PC-3 (cell line): ENCODE measurements at regions of chr15 and their contacts with region 1.

Region 1: DNA sequence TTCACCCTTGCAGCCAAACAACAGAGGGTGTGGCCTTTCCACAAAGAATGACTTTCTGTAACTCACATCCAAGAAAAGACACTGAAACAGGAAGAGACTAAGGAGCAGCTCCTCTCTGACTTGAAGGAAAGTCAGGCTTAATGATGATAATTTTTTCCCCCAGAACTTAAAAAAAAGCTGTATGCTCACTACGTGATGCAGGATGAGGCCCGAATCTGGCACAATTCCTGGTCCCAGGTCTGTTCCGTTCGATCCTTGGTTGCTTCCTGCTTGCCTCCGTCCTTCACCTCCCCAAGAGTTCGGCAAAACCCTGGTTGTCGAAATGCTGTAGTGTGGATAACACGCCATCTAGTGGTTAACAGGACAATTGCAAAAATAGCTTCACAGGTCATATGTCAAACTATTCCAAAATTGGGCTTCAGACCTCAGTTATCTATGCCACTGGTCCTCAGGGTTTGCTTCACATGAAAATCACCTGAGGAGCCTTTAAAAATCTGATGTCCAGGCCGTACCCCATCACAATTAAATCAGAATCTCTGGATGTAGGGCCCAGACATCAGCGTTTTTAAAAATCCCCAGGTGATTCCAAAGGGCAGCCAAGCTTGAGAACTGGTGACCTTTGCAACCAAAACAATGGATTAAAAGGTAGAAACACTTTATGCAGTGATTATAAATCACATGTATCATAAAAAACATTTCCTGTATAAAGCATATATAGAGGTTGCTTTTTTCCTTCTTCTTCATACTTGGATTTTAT is 28.1 kb upstream of the SYNM start:
- DNase-seq: peak; percentile 83
- ATAC-seq: peak; percentile 90
- H3K4me3 ChIP-seq: peak overlapping the region; percentile 62
- H3K27ac ChIP-seq: no peak overlapping the region
- H3K4me1 ChIP-seq: no peaks in the 10 kb centered on the region
- H3K27me3 ChIP-seq: no peaks in the 10 kb centered on the region
- CTCF ChIP-seq: peak; percentile 89

Region 2: DNA sequence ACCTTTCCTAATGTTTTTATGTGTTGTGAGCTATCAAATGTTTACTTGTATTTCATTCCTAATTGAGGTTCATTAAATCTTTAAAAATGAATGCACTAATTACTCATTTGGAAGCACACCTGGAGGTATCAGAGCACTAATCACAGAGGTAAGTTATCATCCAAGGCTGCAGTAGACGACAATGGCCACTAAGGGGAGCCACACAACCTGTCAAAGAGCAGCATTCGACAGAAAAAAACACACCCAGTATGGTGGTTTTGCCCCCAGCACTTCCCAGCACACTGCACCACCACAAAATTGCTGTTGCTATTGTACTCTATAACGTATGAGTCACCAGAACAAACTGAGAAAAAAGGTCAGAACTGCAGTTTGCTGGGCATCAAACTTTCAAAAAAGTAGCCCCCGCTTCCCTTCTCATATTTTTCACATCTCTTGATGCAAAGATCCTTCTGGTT is 634.3 kb before region 1 on chr15:
- CTCF ChIA-PET with region 1: no interaction called
- POLR2A ChIA-PET with region 1: no interaction called
- intact Hi-C with region 1: loop called (anchors 1 kb)
- DNase-seq: peak; percentile 88
- ATAC-seq: peak; percentile 92
- H3K4me3 ChIP-seq: no peak overlapping the region
- H3K27ac ChIP-seq: no peak overlapping the region
- H3K4me1 ChIP-seq: peaks cover 9% of the 10 kb centered on the region
- H3K27me3 ChIP-seq: peaks cover 24% of the 10 kb centered on the region
- CTCF ChIP-seq: peak; percentile 93

Region 3: DNA sequence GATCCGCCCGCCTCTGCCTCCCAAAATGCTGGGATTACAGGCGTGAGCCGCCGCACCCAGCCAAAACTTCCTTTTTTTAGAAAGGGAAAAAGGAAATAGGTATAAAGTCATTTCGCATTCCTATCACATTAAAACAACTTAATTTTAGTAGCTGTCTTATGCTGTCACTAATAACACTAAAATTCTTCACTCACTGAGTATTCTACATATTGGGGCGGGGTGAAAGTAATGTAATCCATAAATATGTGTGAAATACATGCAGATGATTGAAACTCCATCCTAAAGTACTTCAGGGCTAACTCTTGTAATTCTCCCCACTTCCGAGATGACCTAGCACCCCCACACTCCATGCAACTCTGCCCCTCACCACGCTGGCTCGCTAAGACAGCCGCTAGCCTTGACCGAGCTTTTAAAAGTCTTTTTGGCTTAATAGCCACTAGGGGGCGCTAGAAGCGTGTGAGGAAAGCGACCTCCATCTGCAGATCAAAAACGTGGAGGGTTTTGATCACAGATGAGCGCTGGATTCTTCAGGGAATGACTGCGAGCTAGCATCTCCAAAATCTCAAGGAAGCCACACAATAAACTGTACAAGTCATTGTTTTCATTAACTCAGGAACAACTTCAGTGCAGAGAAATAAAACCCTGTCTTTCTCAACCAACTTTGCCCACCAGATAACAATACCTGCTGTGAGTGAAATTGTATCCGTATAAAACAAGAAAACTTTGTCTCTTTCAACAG is 557.7 kb before region 1 on chr15:
- CTCF ChIA-PET with region 1: interaction called, 4 read pairs
- POLR2A ChIA-PET with region 1: no interaction called
- intact Hi-C with region 1: loop called (anchors 1 kb)
- DNase-seq: peak; percentile 77
- ATAC-seq: peak; percentile 88
- H3K4me3 ChIP-seq: no peak overlapping the region
- H3K27ac ChIP-seq: no peak overlapping the region
- H3K4me1 ChIP-seq: no peaks in the 10 kb centered on the region
- H3K27me3 ChIP-seq: peaks cover 8% of the 10 kb centered on the region; the same call in 1 of the 2 replicates
- CTCF ChIP-seq: peak; percentile 90

Region 4: GRCh38 chr15:98658831-98659699 is 417.7 kb before region 1 on chr15:
- CTCF ChIA-PET with region 1: no interaction called
- POLR2A ChIA-PET with region 1: no interaction called
- intact Hi-C with region 1: loop called (anchors 2 kb)
- DNase-seq: peak; percentile 74
- ATAC-seq: peak; percentile 77
- H3K4me3 ChIP-seq: no peak overlapping the region
- H3K27ac ChIP-seq: no peak overlapping the region
- H3K4me1 ChIP-seq: peaks cover 8% of the 10 kb centered on the region; the same call in 1 of the 2 replicates
- H3K27me3 ChIP-seq: peaks cover 7% of the 10 kb centered on the region; the same call in 1 of the 2 replicates
- CTCF ChIP-seq: peak; percentile 89

Region 5: GRCh38 chr15:98827217-98827616 is 249.5 kb before region 1 on chr15:
- CTCF ChIA-PET with region 1: no interaction called
- POLR2A ChIA-PET with region 1: no interaction called
- intact Hi-C with region 1: no loop called
- DNase-seq: no peak
- ATAC-seq: no peak
- H3K4me3 ChIP-seq: no peak overlapping the region
- H3K27ac ChIP-seq: no peak overlapping the region
- H3K4me1 ChIP-seq: peaks cover 10% of the 10 kb centered on the region
- H3K27me3 ChIP-seq: no peaks in the 10 kb centered on the region
- CTCF ChIP-seq: no peak

Region 6: DNA sequence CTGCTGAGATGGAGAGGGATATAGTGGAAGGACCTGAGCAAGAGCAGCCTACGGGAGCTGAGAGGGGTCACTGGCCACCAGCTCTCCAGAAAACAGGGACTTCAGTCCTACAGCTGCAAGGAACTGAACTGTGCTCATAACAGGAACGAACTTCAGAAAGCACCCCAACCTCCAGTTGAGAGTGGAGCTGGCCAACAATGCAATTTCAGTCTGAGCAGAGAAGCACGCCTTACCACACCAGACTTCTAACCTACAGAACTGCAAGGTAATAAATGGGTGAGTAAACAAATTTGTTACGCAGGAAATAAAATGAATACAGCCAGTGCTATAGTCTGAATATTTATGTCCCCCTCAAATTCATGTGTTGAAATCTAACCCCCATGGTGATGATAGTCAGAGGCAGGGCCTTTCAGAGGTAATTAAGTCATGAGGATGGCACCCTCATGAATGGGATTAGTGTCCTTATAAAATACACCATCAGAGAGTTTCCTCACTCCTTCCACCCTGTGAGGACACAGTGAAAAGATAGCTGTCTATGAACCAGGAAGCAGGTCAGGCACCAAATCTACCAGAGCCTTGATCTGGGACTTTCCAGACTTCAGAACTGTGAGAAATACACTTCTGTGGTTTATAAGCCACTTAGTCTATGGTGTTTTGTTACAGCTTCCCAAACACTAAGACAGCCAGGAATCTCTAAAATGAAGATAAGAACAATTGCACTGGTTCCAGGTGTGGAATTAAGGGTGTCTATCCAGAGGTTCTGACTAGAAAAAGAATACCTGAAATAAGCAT is 86.7 kb after region 1 on chr15:
- CTCF ChIA-PET with region 1: no interaction called
- POLR2A ChIA-PET with region 1: no interaction called
- intact Hi-C with region 1: no loop called
- DNase-seq: no peak
- ATAC-seq: no peak
- H3K4me3 ChIP-seq: no peak overlapping the region
- H3K27ac ChIP-seq: no peak overlapping the region
- H3K4me1 ChIP-seq: no peaks in the 10 kb centered on the region
- H3K27me3 ChIP-seq: no peaks in the 10 kb centered on the region
- CTCF ChIP-seq: no peak

Region 7: DNA sequence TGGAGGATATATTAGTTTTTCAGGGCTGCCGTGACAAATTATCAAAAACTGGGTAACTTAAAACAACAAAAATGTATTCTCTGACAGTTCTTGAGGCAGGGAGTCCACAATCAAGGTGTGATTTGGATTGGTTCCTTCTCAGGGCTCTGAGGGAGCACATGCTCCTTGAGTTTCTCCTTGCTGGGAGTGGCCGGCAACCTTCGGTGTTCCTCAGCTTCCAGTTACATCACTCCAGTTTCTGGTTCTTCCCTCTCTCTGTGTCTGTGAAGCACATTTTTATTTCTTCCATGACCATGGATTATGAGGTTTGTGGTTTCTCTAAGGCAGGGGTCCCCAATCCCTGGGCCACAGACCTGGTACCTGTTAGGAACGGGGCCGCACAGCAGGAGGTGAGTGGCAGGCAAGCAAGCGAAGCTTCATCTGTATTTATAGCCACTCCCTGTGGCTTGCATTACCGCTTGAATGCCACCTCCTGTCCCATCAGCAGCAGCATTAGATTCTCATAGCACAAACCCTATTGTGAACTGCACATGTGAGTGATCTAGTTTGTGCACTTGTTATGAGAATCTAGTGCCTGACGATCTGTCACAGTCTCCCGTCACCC is 198.9 kb after region 1 on chr15:
- CTCF ChIA-PET with region 1: no interaction called
- POLR2A ChIA-PET with region 1: no interaction called
- intact Hi-C with region 1: no loop called
- DNase-seq: no peak
- ATAC-seq: no peak
- H3K4me3 ChIP-seq: no peak overlapping the region
- H3K27ac ChIP-seq: no peak overlapping the region
- H3K4me1 ChIP-seq: no peaks in the 10 kb centered on the region
- H3K27me3 ChIP-seq: no peaks in the 10 kb centered on the region
- CTCF ChIP-seq: no peak